Gastrocnemius medialis (tissue), 4 donors: ENCODE measurements at regions of chrX and their contacts with region 1.

Region 1: GRCh38 chrX:10119399-10119990 is 37.3 kb upstream of the CLCN4 start:
- DNase-seq: peak; percentile 52 to 55
- ATAC-seq: peak; percentile 83 to 92
- H3K4me3 ChIP-seq: no peak overlapping the region
- H3K27ac ChIP-seq: peak overlapping the region in 1 of 4 donors; percentile 21
- H3K4me1 ChIP-seq: peaks cover 0 to 10% of the 10 kb centered on the region in 2 donors
- H3K27me3 ChIP-seq: no peaks in the 10 kb centered on the region
- CTCF ChIP-seq: peak; percentile 97 to 100 (median 100)
- POLR2A ChIP-seq: no peak

Region 2: GRCh38 chrX:8743126-8743732 is 1376.3 kb before region 1 on chrX:
- in situ Hi-C with region 1: no loop called
- intact Hi-C with region 1: loop called (anchors 10 kb)
- DNase-seq: peak in 1 of 2 donors; percentile 31
- ATAC-seq: peak in 1 of 2 donors; percentile 36
- H3K4me3 ChIP-seq: no peak overlapping the region
- H3K27ac ChIP-seq: no peak overlapping the region
- H3K4me1 ChIP-seq: no peaks in the 10 kb centered on the region
- H3K27me3 ChIP-seq: peaks cover 0 to 3% (median 0%) of the 10 kb centered on the region in 3 donors
- CTCF ChIP-seq: peak; percentile 19 to 73 (median 58)
- POLR2A ChIP-seq: no peak

Region 3: GRCh38 chrX:9171841-9172463 is 947.5 kb before region 1 on chrX:
- in situ Hi-C with region 1: no loop called
- intact Hi-C with region 1: no loop called
- DNase-seq: no peak
- ATAC-seq: no peak
- H3K4me3 ChIP-seq: no peak overlapping the region
- H3K27ac ChIP-seq: no peak overlapping the region
- H3K4me1 ChIP-seq: no peaks in the 10 kb centered on the region
- H3K27me3 ChIP-seq: no peaks in the 10 kb centered on the region
- CTCF ChIP-seq: no peak
- POLR2A ChIP-seq: no peak

Region 4: DNA sequence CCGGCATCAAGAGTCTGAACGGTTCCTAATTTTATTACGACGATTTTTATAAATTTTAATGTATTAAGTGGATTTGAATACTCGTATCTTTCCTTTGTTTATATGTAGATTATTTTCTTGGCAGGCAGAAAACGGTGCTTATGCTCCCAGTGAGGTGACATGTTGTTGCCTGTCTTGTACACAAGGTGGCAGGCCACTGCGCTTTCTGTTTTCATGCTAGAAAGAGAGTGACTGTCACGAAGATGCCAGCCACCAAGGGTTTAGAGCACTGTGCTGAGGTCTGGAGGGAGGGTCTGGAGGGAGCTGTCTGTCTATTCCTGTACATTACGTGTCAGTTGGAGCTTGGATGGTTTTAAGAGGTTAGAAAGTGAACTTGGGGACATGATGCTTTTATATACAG is 245.5 kb before region 1 on chrX:
- in situ Hi-C with region 1: no loop called
- intact Hi-C with region 1: loop called (anchors 10 kb)
- DNase-seq: no peak
- ATAC-seq: no peak
- H3K4me3 ChIP-seq: no peak overlapping the region
- H3K27ac ChIP-seq: no peak overlapping the region
- H3K4me1 ChIP-seq: no peaks in the 10 kb centered on the region
- H3K27me3 ChIP-seq: no peaks in the 10 kb centered on the region
- CTCF ChIP-seq: peak in 2 of 5 experiments; percentile 36 to 41
- POLR2A ChIP-seq: no peak

Region 5: DNA sequence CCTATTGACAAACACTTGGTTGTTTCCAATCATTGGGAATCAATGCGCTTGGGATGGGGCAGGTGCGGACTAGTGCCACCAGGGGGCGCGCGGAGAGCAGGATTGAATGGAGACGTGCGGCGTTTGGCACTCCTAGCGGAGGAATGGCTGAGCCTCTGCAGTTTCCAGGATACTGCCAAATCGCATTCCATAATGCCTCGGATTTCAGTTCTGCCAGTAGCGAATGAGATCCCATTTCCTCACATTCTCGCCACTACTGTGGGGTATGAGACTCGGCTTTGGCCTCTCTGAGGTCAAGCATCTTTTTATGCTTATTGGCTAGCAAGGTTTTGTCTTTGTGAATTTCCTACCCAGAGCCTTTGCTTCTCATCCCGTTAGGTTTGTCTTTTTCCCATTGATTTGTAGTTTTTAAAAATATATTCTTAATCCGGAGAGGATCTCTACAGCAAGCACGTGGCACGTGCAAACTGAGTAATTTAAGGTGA is 123.6 kb before region 1 on chrX:
- in situ Hi-C with region 1: loop called (anchors 5 kb)
- intact Hi-C with region 1: loop called (anchors 1 kb)
- DNase-seq: peak; percentile 57 to 71
- ATAC-seq: peak; percentile 86 to 98
- H3K4me3 ChIP-seq: no peak overlapping the region
- H3K27ac ChIP-seq: no peak overlapping the region
- H3K4me1 ChIP-seq: no peaks in the 10 kb centered on the region
- H3K27me3 ChIP-seq: no peaks in the 10 kb centered on the region
- CTCF ChIP-seq: peak; percentile 88 to 97 (median 91)
- POLR2A ChIP-seq: no peak

Region 6: DNA sequence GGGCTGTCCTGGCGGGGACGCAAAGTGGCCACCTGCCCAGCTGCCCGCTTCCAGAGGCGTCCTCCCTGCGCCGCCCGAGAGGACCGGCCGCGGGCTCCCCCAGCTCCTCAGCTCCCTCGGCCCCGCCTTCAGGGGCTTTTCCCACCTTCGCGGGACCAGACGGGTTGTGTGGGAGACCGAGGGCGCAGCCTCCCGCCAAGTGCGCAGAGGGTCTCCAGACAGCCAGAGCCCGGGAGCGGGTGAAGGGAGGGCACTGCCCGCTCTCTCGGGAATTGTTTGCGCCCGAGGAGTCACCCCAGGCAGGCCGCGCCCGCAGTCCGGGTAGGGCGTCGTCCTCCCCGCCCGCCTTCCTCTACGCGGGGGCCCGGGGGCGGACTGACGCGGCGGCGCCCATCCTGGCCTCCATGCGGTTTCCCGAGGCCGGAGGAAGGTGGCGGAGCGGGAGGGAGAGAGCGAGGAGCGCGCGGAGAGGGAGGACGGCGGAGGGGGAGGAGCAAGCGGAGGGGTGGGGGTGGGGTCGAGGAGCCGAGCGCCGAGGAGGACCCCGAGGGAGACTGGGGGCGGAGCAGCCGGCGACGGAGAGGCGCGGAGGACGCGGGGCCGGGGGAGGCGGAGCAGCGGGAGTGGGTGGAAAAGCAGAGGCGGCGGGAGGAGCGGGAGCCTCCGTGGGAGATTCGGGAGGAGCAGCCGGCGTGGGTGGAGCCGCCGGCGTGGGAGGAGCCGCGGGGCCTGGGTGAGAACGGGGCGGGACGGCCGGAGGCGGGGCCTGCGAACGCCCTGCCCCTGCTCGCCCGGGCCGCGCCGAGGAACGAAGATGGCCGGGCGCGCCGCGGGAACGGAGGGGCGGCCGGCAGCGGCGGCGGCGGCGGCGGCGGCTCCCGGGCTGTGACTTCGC is 104.8 kb before region 1 on chrX:
- in situ Hi-C with region 1: no loop called
- intact Hi-C with region 1: loop called (anchors 5 kb)
- DNase-seq: peak; percentile 65 to 75
- ATAC-seq: peak; percentile 84 to 87
- H3K4me3 ChIP-seq: peak overlapping the region; percentile 45 to 78 (median 68)
- H3K27ac ChIP-seq: peak overlapping the region; percentile 81 to 86 (median 84)
- H3K4me1 ChIP-seq: no peaks in the 10 kb centered on the region
- H3K27me3 ChIP-seq: no peaks in the 10 kb centered on the region
- CTCF ChIP-seq: no peak
- POLR2A ChIP-seq: peak; percentile 63 to 68

Region 7: GRCh38 chrX:10052906-10053625 is 66.4 kb before region 1 on chrX:
- in situ Hi-C with region 1: no loop called
- intact Hi-C with region 1: loop called (anchors 2 kb)
- DNase-seq: peak; percentile 14 to 37
- ATAC-seq: peak; percentile 74 to 87
- H3K4me3 ChIP-seq: no peak overlapping the region
- H3K27ac ChIP-seq: peak overlapping the region in 3 of 4 donors; percentile 26 to 55 (median 52)
- H3K4me1 ChIP-seq: peaks cover 28 to 33% of the 10 kb centered on the region in 2 donors
- H3K27me3 ChIP-seq: no peaks in the 10 kb centered on the region
- CTCF ChIP-seq: no peak
- POLR2A ChIP-seq: no peak

Region 8: GRCh38 chrX:10142041-10142599 is 22.6 kb after region 1 on chrX:
- in situ Hi-C with region 1: no loop called
- intact Hi-C with region 1: no loop called
- DNase-seq: no peak
- ATAC-seq: no peak
- H3K4me3 ChIP-seq: no peak overlapping the region
- H3K27ac ChIP-seq: no peak overlapping the region
- H3K4me1 ChIP-seq: no peaks in the 10 kb centered on the region
- H3K27me3 ChIP-seq: no peaks in the 10 kb centered on the region
- CTCF ChIP-seq: no peak
- POLR2A ChIP-seq: no peak